ENCODE measurements at regions of chr4 and their contacts with region 1.

Region 1: GRCh38 chr4:83362492-83363329 is 28.1 kb upstream of the HPSE start:
- DNase-seq: peak; percentile 34
- ATAC-seq: peak; percentile 84
- H3K4me3 ChIP-seq: no peak overlapping the region
- H3K27ac ChIP-seq: no peak overlapping the region
- H3K4me1 ChIP-seq: peaks cover 1% of the 10 kb centered on the region
- H3K27me3 ChIP-seq: peaks cover 14% of the 10 kb centered on the region
- CTCF ChIP-seq: peak; percentile 47
- POLR2A ChIP-seq: no peak
- RAD21 ChIP-seq: peak; percentile 36; the same call in 1 of the 2 replicates

Region 2: DNA sequence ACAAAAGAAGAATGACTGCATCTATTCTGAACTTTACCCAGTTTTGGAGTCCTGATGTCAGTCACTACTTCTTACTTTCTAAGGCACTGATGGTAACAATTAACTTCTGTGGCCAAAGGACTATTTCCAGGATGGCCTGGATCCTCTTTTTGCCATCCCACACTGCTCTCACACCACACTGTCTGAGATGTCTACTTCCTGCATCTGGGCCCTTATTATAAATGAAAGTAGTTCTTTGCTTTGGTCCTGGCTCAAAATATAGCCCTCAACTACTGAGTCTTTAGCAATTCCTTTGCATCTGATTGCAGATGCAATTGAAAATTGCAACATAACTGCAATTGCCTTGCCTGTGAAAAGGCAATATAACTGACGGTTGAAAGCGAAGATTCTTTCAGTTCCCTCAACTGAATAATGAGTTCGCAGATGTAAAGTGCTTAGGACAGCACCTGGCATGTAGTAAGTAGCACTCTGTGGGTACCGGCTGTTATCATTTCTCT is 122.3 kb before region 1 on chr4:
- CTCF ChIA-PET with region 1: no interaction called
- POLR2A ChIA-PET with region 1: no interaction called
- dilution Hi-C with region 1: no loop called
- in situ Hi-C with region 1: no loop called
- intact Hi-C with region 1: no loop called
- DNase-seq: no peak
- ATAC-seq: no peak
- H3K4me3 ChIP-seq: no peak overlapping the region
- H3K27ac ChIP-seq: no peak overlapping the region
- H3K4me1 ChIP-seq: no peaks in the 10 kb centered on the region
- H3K27me3 ChIP-seq: no peaks in the 10 kb centered on the region
- CTCF ChIP-seq: no peak
- POLR2A ChIP-seq: no peak
- RAD21 ChIP-seq: no peak

Region 3: GRCh38 chr4:83455281-83456129 is 92.8 kb after region 1 on chr4 and contains the starts of genes HELQ and MRPS18C:
- CTCF ChIA-PET with region 1: interaction called, 4 read pairs
- POLR2A ChIA-PET with region 1: no interaction called
- dilution Hi-C with region 1: no loop called
- in situ Hi-C with region 1: no loop called
- intact Hi-C with region 1: loop called (anchors 1 kb)
- DNase-seq: peak; percentile 99
- ATAC-seq: peak; percentile 96
- H3K4me3 ChIP-seq: peak within 1 kb of the TSS; percentile 67
- H3K27ac ChIP-seq: peak within 1 kb of the TSS; percentile 78
- H3K4me1 ChIP-seq: no peaks in the 10 kb centered on the region
- H3K27me3 ChIP-seq: no peaks in the 10 kb centered on the region
- CTCF ChIP-seq: peak; percentile 22; the same call in 1 of the 2 replicates
- POLR2A ChIP-seq: peak; percentile 97
- RAD21 ChIP-seq: no peak
- total RNA-seq, gene HELQ: 9.1 and 13.1 TPM in 2 replicates
- total RNA-seq, gene MRPS18C: 8.6 and 23.9 TPM in 2 replicates

Region 4: DNA sequence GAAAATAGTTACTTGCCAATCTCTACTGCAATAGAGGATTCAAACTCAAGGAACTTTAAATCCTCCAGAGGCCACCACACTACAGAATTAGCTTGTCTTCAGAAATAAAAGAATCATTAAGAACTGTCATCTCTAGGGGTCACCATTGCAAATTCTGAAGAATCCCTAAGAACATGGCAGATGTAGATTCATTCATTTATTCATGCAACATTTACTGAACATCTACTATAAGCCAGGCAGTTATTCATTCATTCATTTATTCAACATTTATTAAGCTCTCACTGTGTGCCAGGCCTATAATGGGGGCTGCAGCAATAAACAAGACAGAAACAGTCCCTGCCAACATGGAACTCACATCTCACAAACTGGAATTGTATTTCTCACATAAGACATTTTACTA is 908.2 kb after region 1 on chr4:
- CTCF ChIA-PET with region 1: no interaction called
- POLR2A ChIA-PET with region 1: no interaction called
- dilution Hi-C with region 1: no loop called
- in situ Hi-C with region 1: no loop called
- intact Hi-C with region 1: no loop called
- DNase-seq: no peak
- ATAC-seq: no peak
- H3K4me3 ChIP-seq: no peak overlapping the region
- H3K27ac ChIP-seq: no peak overlapping the region
- H3K4me1 ChIP-seq: no peaks in the 10 kb centered on the region
- H3K27me3 ChIP-seq: no peaks in the 10 kb centered on the region
- CTCF ChIP-seq: no peak
- POLR2A ChIP-seq: no peak
- RAD21 ChIP-seq: no peak